AG04449 (cell line): ENCODE measurements at regions of chr1 and their contacts with region 1.

Region 1: DNA sequence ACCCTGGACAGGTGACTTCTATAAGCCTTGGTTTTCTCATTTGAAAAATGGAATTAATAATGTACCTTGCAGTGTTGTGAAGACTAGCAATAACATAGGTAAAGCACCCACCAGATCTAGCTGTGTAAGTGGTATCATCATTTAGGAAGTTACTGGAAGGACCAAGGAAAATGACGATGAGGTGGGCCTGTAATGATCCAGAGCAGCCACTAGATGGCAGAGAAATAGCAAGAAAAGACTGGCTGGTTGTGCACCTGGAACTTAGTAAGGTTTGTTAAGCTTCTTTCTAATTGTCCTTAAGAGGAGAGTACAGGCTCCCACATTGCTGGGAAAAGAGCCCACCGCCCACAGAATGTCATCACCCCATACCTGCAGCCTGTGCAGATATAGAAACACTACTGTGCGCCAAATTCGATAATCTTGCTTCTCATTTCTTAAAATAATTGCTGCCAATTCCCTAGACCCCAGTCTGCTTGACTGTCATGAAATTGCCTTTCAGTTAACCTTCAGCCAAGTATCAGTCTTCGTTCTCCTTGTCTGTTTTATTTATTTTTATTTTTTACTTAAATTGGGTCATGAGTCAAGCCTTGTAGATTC is 37.2 kb downstream of the WNT4 start:
- DNase-seq: no peak
- H3K4me3 ChIP-seq: no peak overlapping the region
- CTCF ChIP-seq: peak; percentile 78

Region 2: GRCh38 chr1:20964540-20965484 is 1140.9 kb before region 1 on chr1:
- CTCF ChIA-PET with region 1: no interaction called
- POLR2A ChIA-PET with region 1: no interaction called
- DNase-seq: no peak
- H3K4me3 ChIP-seq: no peak overlapping the region
- CTCF ChIP-seq: no peak

Region 3: GRCh38 chr1:21673277-21673780 is 432.4 kb before region 1 on chr1:
- CTCF ChIA-PET with region 1: no interaction called
- POLR2A ChIA-PET with region 1: no interaction called
- DNase-seq: peak; percentile 40
- H3K4me3 ChIP-seq: no peak overlapping the region
- CTCF ChIP-seq: no peak

Region 4: GRCh38 chr1:21919520-21919919 is 186.2 kb before region 1 on chr1:
- CTCF ChIA-PET with region 1: no interaction called
- POLR2A ChIA-PET with region 1: no interaction called
- DNase-seq: no peak
- H3K4me3 ChIP-seq: no peak overlapping the region
- CTCF ChIP-seq: no peak

Region 5: DNA sequence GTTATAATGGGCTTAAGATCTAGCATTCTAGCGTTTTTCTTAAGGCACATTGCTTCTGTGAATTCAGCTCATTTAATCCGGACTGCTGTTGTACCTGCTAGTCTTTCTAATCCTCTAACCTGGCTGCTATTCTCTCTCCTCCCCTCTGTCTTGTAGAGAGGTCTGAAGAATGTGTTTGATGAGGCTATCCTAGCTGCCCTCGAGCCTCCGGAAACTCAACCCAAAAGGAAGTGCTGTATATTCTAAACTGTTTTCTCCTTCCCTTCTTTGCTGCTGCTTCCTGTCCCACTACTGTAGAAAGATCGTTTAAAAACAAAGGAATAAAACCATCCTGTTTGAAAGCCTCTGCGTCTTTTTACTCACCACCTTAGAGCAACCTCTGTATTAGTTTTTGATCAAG is 15.9 kb before region 1 on chr1:
- CTCF ChIA-PET with region 1: interaction called, 22 read pairs
- POLR2A ChIA-PET with region 1: no interaction called
- DNase-seq: no peak
- H3K4me3 ChIP-seq: no peak overlapping the region
- CTCF ChIP-seq: no peak

Region 6: GRCh38 chr1:22328331-22329152 is 222.8 kb after region 1 on chr1:
- CTCF ChIA-PET with region 1: no interaction called
- POLR2A ChIA-PET with region 1: no interaction called
- DNase-seq: no peak
- H3K4me3 ChIP-seq: no peak overlapping the region
- CTCF ChIP-seq: no peak